ENCODE measurements at regions of chr4 and their contacts with region 1.

Region 1: GRCh38 chr4:25312496-25313200 is at the start of gene ZCCHC4:
- DNase-seq: peak; percentile 90 to 93 (median 92)
- H3K4me3 ChIP-seq: peak within 1 kb of the TSS; percentile 82 to 95 (median 87)
- H3K4me3 Mint-ChIP-seq: peak within 1 kb of the TSS; percentile 99
- H3K27ac ChIP-seq: peak within 1 kb of the TSS; percentile 50 to 71
- H3K27ac Mint-ChIP-seq: peak within 1 kb of the TSS; percentile 90 to 95 (median 94)
- H3K4me1 ChIP-seq: peaks cover 16 to 27% of the 10 kb centered on the region in 2 donors
- H3K4me1 Mint-ChIP-seq: peaks cover 40% of the 10 kb centered on the region
- H3K27me3 ChIP-seq: no peaks in the 10 kb centered on the region
- H3K27me3 Mint-ChIP-seq: peaks cover 0 to 3% (median 2%) of the 10 kb centered on the region in 3 donors
- CTCF ChIP-seq: peak; percentile 99
- polyA plus RNA-seq, gene ZCCHC4: 1.6 to 3.5 (median 3.4) TPM

Region 2: GRCh38 chr4:24584175-24584850 is 728.3 kb before region 1 on chr4 and contains the start of gene DHX15:
- intact Hi-C with region 1: loop called in 1 of 2 experiments (anchors 10 kb)
- DNase-seq: peak; percentile 98 to 99 (median 99)
- H3K4me3 ChIP-seq: peak within 1 kb of the TSS; percentile 80 to 88 (median 83)
- H3K4me3 Mint-ChIP-seq: peak within 1 kb of the TSS; percentile 96 to 99
- H3K27ac ChIP-seq: peak within 1 kb of the TSS; percentile 77 to 97
- H3K27ac Mint-ChIP-seq: peak within 1 kb of the TSS; percentile 91 to 99 (median 96)
- H3K4me1 ChIP-seq: peaks cover 19 to 26% of the 10 kb centered on the region in 2 donors
- H3K4me1 Mint-ChIP-seq: peaks cover 33% of the 10 kb centered on the region
- H3K27me3 ChIP-seq: no peaks in the 10 kb centered on the region
- H3K27me3 Mint-ChIP-seq: no peaks in the 10 kb centered on the region
- CTCF ChIP-seq: no peak
- polyA plus RNA-seq, gene DHX15: 27.2 to 77.7 (median 37.5) TPM

Region 3: DNA sequence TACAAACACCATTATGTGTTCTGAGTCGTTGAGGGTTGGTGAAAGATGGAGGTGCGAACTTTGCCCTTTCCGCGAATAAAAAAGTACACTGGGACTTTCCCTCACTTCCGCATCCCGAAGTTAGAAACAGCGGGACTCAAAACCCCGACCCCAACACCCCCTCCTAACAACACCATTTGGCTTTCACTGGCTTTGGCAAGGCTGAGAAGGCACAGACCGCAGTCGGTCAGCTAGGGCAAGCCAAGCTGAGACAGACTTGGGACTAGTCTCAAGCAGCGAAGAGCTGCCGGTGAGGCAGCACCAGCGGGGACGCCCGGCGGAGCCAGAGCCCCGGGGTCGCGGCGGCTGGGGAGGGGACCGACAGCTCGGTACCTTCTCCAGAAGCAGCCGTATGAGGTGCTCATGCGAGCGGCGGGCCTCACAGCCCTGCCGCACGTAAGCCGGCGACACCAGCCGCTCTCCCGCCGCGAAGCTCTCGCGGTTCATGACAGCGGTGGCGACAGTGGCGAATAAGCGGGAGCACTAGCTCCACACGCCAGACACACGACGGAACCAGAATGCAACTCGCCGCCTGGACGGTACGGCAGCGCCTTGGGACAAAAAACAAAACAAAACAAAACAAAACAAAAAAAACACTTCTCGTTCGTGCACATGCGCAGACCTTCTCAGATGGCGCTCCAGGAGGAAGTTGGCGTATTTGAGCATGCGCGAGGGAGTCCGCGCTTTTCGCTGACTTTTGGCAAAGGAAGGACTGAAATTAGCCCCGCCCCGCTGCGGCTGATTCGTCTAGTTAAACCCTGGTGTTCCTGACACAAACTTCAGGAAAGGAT is 152.5 kb before region 1 on chr4 and contains the start of gene SEPSECS:
- intact Hi-C with region 1: loop called in 1 of 2 experiments (anchors 5 kb)
- DNase-seq: peak; percentile 95 to 97 (median 97)
- H3K4me3 ChIP-seq: peak within 1 kb of the TSS; percentile 62 to 93 (median 92)
- H3K4me3 Mint-ChIP-seq: peak within 1 kb of the TSS; percentile 86 to 96
- H3K27ac ChIP-seq: peak within 1 kb of the TSS; percentile 98
- H3K27ac Mint-ChIP-seq: peak within 1 kb of the TSS; percentile 90 to 99 (median 98)
- H3K4me1 ChIP-seq: peaks cover 31 to 41% of the 10 kb centered on the region in 2 donors
- H3K4me1 Mint-ChIP-seq: peaks cover 45% of the 10 kb centered on the region
- H3K27me3 ChIP-seq: no peaks in the 10 kb centered on the region
- H3K27me3 Mint-ChIP-seq: peaks cover 0 to 4% (median 0%) of the 10 kb centered on the region in 3 donors
- CTCF ChIP-seq: no peak
- polyA plus RNA-seq, gene SEPSECS: 0.65 to 5.8 (median 2.1) TPM

Region 4: DNA sequence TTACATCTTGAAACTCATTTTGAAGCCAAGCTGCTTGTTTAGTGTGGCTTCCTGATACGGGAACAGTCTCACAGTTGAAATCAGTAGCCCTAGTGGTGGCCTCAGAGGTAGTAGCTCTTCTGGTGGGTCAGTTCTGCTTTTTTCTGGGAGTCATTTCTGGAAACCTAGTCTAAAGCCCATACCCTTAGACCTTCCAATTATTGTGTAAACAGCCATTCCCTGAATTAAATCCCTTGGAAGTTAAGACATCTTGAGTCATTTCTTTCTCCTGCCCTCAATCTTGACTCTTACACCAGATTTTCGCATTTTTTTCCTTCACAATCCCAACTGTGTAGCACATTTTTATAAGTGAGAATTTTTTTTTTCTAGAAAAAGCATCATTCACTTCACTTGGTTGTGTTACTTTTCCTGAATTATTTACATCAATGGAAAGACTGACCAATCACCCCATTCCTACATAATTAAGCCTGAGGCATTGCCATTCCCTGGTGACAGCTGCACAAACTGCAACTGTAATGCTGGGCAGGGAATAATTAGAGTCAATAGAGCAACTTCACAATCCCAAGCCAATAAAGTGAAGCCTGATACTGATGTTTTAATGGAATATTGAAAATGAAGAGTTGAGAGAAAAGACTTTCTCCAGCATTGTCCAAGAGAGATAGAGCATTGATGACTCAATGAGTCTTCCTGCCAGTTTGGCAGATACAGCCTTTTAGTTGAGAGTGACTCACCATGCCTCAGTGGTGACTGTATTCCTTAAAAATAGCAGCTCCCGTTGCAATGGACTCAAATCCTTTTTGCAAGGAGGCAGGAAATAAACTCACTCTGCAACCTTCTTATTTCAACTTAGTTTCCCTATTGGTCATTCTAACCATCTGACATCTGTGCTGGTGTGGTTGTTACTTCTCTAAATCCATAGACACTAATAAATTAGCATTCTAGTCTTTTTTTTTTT is 139.4 kb before region 1 on chr4:
- intact Hi-C with region 1: loop called in 1 of 2 experiments (anchors 10 kb)
- DNase-seq: peak; percentile 75 to 94 (median 85)
- H3K4me3 ChIP-seq: peak overlapping the region in 1 of 3 experiments; percentile 47
- H3K4me3 Mint-ChIP-seq: peak overlapping the region in 1 of 2 donors; percentile 30
- H3K27ac ChIP-seq: peak overlapping the region in 1 of 2 donors; percentile 71
- H3K27ac Mint-ChIP-seq: peak overlapping the region; percentile 34 to 86 (median 78)
- H3K4me1 ChIP-seq: peaks cover 22 to 26% of the 10 kb centered on the region in 2 donors
- H3K4me1 Mint-ChIP-seq: peaks cover 22% of the 10 kb centered on the region
- H3K27me3 ChIP-seq: no peaks in the 10 kb centered on the region
- H3K27me3 Mint-ChIP-seq: peaks cover 0 to 1% (median 0%) of the 10 kb centered on the region in 3 donors
- CTCF ChIP-seq: peak; percentile 36

Region 5: DNA sequence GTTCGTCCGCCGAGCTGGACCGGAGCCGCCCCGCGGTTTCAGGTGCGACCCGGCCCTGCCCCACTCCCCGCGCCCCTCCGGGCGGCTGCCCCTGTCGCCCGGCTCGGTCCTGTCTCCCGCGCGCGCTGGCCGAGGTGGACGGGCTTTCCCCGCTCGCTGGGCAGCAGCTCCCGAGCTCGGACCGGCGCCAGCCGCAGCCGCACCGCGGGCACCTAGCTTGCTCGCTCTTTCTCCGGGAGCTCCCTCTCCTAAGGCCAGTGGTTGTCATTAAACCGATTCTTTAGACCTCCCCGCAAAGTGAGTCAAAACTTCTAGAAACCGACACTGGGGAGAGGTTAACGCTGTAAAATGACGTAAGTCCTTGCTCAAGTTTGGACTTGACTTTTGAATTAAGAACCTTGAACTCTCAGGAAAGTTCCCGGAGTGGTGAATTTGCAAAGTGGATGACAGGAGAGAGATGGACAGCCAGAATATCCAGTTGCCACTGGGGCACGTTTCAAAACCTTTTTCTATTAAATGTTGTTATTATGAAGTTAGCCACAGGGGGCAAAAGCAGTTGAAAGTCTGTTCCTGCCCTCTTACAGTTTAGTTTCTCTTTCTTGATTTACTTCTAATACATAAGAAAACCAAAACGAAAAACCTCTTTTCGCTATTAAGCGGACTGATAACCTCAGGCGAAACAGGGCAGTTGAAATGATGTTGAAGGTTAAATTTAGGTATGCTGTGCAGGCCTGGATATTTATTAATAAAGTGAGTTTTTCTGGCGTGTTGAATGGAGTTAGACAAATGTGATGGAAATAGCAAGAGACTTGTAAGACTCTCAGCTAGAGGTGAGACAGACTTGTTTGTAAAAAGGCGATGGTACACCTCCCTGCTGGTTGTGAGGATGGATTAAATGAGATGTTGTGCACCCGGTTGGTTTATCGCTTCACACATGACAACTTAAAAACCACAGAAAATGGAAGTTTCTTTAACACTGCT is 78.0 kb before region 1 on chr4:
- intact Hi-C with region 1: loop called in 1 of 2 experiments (anchors 5 kb)
- DNase-seq: peak; percentile 69 to 87 (median 81)
- H3K4me3 ChIP-seq: peak overlapping the region; percentile 82 to 99 (median 84)
- H3K4me3 Mint-ChIP-seq: peak overlapping the region; percentile 87 to 95
- H3K27ac ChIP-seq: peak overlapping the region; percentile 75 to 92
- H3K27ac Mint-ChIP-seq: peak overlapping the region; percentile 74 to 97 (median 92)
- H3K4me1 ChIP-seq: peaks cover 18 to 35% of the 10 kb centered on the region in 2 donors
- H3K4me1 Mint-ChIP-seq: peaks cover 28% of the 10 kb centered on the region
- H3K27me3 ChIP-seq: no peaks in the 10 kb centered on the region
- H3K27me3 Mint-ChIP-seq: peaks cover 0 to 5% (median under 1%) of the 10 kb centered on the region in 3 donors
- CTCF ChIP-seq: peak; percentile 74

Region 6: DNA sequence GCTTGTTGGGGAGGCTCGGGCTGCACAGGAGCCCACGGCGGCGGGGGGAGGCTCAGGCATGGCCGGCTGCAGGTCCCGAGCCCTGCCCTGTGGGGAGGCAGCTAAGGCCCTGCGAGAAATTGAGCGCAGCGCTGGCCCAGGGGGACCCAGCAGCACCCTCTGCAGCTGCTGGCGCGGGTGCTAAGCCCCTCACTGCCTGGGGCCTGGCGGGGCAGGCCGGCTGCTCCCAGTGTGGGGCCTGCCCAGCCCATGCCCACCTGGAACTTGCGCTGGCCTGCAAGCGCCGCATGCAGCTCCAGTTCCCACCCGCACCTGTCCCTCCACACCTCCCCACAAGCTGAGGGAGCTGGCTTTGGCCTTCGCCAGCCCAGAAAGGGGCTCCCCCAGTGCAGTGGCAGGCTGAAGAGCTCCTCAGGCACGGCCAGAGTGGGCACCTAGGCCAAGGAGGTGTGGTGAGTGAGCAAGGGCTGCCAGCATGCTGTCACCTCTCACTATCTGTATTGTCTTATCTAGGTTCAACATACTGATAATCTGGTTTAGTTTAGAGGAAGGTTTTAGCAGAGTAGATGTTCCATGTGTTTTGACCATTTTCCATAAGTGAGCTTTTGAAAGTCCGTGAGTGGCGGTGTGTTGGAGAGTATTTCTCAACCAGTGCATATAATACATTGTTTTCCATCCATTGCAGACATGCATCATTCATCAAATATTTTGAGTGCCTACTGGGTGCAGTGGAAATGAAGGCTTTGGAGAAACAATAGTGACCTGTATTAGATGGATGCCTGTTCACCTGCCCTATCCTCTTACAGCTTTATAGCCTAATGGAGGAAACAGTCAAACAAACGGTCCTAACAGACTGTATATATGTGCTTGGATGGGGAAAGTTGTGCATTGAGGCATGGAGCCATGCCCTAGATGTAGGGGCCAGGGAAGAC is 65.7 kb before region 1 on chr4:
- intact Hi-C with region 1: loop called in 1 of 2 experiments (anchors 10 kb)
- DNase-seq: no peak
- H3K4me3 ChIP-seq: no peak overlapping the region
- H3K4me3 Mint-ChIP-seq: no peak overlapping the region
- H3K27ac ChIP-seq: no peak overlapping the region
- H3K27ac Mint-ChIP-seq: peak overlapping the region in 1 of 7 donors; percentile 53
- H3K4me1 ChIP-seq: peaks cover 6% of the 10 kb centered on the region in 2 donors
- H3K4me1 Mint-ChIP-seq: peaks cover 15% of the 10 kb centered on the region
- H3K27me3 ChIP-seq: no peaks in the 10 kb centered on the region
- H3K27me3 Mint-ChIP-seq: no peaks in the 10 kb centered on the region
- CTCF ChIP-seq: no peak

Region 7: DNA sequence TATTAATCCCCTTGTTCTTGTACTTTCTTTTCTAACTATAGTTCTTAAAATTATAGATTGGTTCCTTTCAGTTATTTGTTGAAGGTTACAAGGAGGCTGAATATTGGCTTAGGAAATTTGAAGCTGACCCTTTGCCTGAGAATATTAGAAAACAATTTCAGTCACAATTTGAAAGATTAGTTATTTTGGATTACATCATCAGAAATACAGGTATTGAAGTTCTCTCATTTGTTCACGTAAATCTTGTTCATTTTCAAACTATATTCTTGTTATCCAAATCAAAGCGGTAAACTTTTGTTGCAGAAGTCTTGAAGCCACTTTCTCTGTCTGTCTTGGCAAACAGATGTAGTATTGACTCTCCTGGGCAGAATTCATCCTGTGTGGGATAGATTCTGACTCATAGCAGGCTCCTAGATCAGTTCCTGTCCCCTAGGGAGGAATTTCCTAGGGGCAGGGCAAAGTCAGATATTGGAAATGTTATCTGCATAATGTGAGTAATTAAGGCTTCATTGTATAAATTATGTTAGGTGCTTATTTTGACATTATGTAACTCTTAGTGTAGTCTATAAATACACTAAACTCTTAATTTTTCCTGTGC is 53.6 kb before region 1 on chr4:
- intact Hi-C with region 1: no loop called
- DNase-seq: no peak
- H3K4me3 ChIP-seq: no peak overlapping the region
- H3K4me3 Mint-ChIP-seq: no peak overlapping the region
- H3K27ac ChIP-seq: no peak overlapping the region
- H3K27ac Mint-ChIP-seq: no peak overlapping the region
- H3K4me1 ChIP-seq: no peaks in the 10 kb centered on the region
- H3K4me1 Mint-ChIP-seq: no peaks in the 10 kb centered on the region
- H3K27me3 ChIP-seq: no peaks in the 10 kb centered on the region
- H3K27me3 Mint-ChIP-seq: no peaks in the 10 kb centered on the region
- CTCF ChIP-seq: no peak

Region 8: GRCh38 chr4:25376754-25377571 is 64.3 kb after region 1 on chr4 and contains the start of gene ANAPC4:
- intact Hi-C with region 1: loop called (anchors 5 to 10 kb)
- DNase-seq: peak; percentile 77 to 81 (median 78)
- H3K4me3 ChIP-seq: peak within 1 kb of the TSS; percentile 94 to 97 (median 96)
- H3K4me3 Mint-ChIP-seq: peak within 1 kb of the TSS; percentile 86 to 96
- H3K27ac ChIP-seq: peak within 1 kb of the TSS; percentile 26 to 77
- H3K27ac Mint-ChIP-seq: peak within 1 kb of the TSS; percentile 58 to 88 (median 77)
- H3K4me1 ChIP-seq: peaks cover 15 to 16% of the 10 kb centered on the region in 2 donors
- H3K4me1 Mint-ChIP-seq: peaks cover 12% of the 10 kb centered on the region
- H3K27me3 ChIP-seq: no peaks in the 10 kb centered on the region
- H3K27me3 Mint-ChIP-seq: peaks cover 0 to 9% (median 2%) of the 10 kb centered on the region in 3 donors
- CTCF ChIP-seq: no peak
- polyA plus RNA-seq, gene ANAPC4: 12.7 to 22.9 (median 15.1) TPM

Measured in CD14-positive monocyte (primary cell).